Dorsolateral prefrontal cortex (tissue), 120 donors: ENCODE measurements at regions of chr1 and their contacts with region 1.

Region 1: GRCh38 chr1:17236779-17237560 is 11.9 kb upstream of the PADI3 start:
- DNase-seq: peak; percentile 79 to 93 (median 87)
- H3K4me3 ChIP-seq: no peak overlapping the region
- H3K27ac ChIP-seq: no peak overlapping the region
- H3K27me3 ChIP-seq: peaks cover 0 to 6% (median 0%) of the 10 kb centered on the region in 45 donors
- CTCF ChIP-seq: peak; percentile 82 to 98 (median 92)

Region 2: GRCh38 chr1:17119076-17119772 is 117.7 kb before region 1 on chr1 and contains the start of gene PADI2:
- intact Hi-C with region 1: loop called in 1 of 2 experiments (anchors 2 kb)
- DNase-seq: peak; percentile 81 to 93 (median 90)
- H3K4me3 ChIP-seq: peak within 1 kb of the TSS; percentile 59 to 96 (median 83)
- H3K27ac ChIP-seq: peak within 1 kb of the TSS in 58 of 59 donors; percentile 40 to 99 (median 83)
- H3K27me3 ChIP-seq: no peaks in the 10 kb centered on the region
- CTCF ChIP-seq: peak in 4 of 56 donors; percentile 12 to 33 (median 19)
- total RNA-seq, gene PADI2: 50.7 to 418 (median 112) TPM